ENCODE measurements at regions of chr17 and their contacts with region 1.

Region 1: DNA sequence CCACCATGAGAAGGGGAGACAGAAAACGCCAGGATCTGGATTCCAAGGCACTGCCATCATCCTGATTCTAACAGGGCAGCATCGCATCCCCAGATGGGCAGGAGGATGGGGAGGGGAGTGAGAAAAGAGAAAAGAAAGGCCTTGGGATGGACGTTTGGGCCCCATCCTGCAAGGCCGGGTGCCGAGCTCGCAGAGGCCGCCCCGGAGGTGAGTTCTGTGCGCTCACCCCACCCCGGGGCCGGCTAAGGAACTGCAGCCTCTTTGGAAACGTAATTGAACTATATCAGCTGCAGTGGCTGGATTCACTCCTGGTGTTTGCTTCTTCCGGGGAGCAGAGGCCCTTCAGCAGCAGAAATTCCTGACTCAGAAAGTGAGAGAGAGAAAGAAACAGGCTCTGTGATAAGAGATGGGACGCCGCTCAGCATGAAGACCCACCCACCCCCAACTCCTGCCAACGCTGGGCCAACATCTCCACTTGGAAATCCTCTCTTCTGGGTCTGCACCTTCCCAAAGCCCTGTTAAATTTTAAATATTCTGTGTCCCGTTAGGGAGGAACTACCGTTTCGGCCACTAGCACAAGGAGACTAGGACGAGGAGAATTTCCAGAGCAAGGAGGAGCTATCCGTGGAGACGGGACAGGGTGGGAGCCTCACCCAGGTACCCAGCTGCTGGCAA is 8.5 kb upstream of the SSTR2 start:
- DNase-seq: peak; percentile 83
- CTCF ChIP-seq: peak; percentile 78

Region 2: DNA sequence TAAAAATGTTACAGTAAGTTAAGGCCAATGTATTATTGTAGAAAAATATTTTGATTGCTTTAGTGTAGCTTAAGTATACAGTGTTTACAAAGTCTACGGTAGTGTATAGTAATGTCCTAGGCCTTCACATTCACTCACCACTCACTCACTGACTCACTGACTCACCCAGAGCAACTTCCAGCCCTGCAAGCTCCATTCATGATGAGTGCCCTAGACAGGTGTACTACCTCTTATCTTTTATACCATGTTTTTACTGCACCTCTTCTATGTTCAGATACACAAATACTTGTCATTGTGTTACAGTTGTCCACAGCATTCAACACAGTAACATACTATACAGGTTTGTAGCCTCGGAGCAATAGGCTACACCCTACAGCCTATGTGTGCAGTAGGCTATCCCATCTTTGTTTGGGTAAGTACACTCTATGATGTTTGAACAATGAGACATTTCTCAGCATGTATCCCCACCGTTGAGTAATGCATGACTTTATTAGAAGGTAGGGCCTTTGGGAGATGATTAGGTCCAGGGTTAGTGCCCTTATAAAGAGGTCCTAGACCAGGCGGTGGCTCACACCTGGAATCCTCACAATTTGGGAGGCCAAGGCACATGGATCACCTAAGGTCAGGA is 181.6 kb before region 1 on chr17:
- in situ Hi-C with region 1: no loop called
- DNase-seq: no peak
- CTCF ChIP-seq: no peak

Region 3: DNA sequence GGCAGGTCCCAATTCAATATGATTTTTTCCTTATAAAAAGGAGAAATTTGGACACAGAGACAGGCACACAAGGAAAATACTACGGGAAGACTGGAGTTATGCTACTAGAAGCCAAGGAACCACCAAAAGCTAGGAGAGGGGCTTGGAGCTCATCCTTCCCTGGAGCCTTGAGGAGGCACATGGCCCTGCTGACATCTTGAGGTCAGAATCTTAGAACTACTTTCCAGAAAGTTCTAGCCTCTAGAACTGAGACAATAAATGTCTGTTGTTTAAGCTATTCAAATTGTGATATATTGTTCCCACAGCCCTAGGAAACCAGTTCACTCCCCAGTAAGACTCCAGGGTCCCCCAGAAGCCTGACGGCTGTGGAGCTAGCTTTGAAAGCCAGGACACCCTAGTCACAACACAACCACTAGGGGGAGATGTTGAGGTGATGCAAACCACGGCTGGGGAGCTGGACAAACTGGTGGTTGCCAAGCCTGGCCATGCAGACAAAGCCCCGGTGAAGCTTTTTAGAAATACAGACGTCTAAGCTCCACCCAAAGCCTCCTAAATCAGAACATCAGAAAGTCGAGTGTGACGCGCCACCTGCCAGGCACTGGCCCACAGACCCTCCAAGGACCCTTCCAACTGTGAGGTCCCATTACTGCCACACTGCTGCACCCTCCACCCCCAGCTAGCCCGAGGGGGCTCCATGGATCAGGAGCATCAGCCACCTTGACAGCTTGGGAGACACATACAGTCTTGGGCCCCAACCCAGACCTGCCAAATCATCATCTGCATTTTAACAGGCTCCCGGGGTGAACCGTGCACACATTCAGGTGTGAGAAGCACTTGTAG is 170.2 kb before region 1 on chr17:
- in situ Hi-C with region 1: loop called (anchors 10 kb)
- DNase-seq: peak; percentile 87
- CTCF ChIP-seq: peak; percentile 84

Region 4: DNA sequence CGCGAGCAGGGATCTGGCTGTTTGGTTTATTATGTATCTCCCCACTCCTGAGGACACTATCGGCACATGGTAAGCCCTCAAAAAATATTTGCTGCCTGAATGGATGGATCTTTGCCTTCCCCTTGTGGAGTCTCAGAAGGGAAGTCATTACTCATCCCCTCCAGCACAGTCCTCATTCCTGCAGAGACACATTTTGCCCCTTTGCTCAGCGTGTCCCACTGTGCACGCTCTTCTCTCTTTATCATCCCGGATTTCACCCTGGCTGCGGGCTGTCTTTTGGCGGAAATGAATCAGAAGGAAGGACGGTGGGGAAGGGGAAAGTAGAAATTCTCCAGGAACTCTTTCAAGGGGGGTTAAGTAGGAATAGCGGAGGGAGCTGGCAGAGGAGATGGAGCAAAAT is 280.7 kb after region 1 on chr17:
- in situ Hi-C with region 1: no loop called
- DNase-seq: no peak
- CTCF ChIP-seq: no peak

Region 5: DNA sequence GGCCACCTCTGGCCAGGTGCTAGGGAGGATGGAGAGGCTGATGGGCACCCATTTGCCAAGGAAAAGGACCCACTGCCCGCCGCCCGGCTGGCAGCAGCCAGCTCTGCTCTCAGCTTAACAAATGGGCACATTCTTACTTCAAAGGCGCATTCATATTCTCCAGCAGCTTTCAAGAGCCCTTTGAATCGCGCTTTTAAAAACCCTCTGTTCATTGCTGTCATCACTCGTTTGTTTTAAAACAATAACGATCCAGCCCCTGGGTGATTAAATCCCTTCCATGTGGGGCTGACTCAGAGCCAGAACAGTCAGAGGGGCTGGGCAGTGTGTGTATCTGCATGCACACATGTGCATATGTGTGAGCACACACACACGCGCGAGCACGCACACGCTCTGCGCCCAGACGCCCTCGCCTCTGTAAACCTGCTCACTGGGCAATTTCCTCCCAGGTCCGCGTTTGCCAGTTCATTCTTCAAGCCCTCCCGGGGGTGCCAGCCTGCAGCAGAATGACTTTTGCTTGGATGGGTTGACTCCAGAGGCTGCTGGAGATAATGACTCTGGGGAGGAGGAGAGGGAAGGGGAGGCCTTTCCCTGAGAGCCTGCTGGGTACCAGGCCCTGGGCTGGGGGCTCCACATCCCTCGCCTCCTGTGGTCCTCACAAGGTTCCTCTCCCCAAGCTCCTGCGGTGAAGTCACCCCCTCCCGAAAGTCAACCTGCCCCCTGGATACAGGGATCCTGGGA is 354.8 kb after region 1 on chr17:
- in situ Hi-C with region 1: no loop called
- DNase-seq: no peak
- CTCF ChIP-seq: no peak

Measured in GM13976 (cell line).